Stomach (tissue), 19 donors: ENCODE measurements at regions of chr19 and their contacts with region 1.

Region 1: DNA sequence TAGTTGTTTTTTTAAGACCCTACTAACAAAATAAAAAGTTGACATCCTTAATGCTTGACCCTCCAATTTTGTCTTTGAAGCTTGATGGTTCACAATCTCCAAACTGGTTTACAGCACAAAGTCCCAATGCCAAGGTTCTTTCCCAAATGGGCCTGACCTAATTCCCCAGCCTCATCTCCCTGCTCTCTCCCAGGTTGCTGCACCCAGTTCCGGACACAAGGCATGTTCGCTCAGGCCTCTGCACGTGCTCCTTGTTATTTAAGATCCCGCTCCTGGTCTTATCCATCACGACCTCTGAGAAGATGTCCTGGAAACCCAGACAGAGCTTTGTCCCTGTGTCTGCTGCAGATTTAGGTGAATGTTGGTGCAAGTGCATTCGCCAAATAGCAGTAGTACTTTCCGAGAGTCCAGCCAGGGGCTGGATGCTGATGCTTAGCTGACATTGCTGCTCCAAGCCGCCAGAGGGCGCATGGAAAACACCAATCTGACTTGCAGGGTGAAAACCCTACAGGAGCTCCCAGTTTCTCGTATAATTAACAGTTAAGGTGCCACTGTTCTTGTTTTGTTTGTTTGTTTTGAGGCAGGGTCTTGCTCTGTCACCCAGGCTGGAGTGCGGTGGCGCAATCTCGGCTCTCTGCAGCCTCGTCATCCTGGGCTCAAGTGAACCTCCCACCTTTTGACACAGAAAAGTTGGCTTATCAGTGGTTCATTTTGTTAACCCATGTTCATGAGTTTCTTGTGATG is 18.5 kb downstream of the LYPD3 start:
- DNase-seq: peak; percentile 80 to 92
- H3K4me3 ChIP-seq: no peak overlapping the region
- H3K27ac ChIP-seq: no peak overlapping the region
- H3K4me1 ChIP-seq: peaks cover 0 to 6% (median 3%) of the 10 kb centered on the region in 4 donors
- H3K27me3 ChIP-seq: no peaks in the 10 kb centered on the region
- CTCF ChIP-seq: peak in 5 of 7 experiments; percentile 88 to 97 (median 94)
- EP300 ChIP-seq: no peak
- POLR2A ChIP-seq: no peak

Region 2: GRCh38 chr19:43519436-43520088 is 72.6 kb after region 1 on chr19:
- intact Hi-C with region 1: loop called (anchors 5 kb)
- DNase-seq: peak; percentile 84 to 94
- H3K4me3 ChIP-seq: no peak overlapping the region
- H3K27ac ChIP-seq: no peak overlapping the region
- H3K4me1 ChIP-seq: peaks cover 2 to 38% (median 11%) of the 10 kb centered on the region in 4 donors
- H3K27me3 ChIP-seq: no peaks in the 10 kb centered on the region
- CTCF ChIP-seq: peak in 5 of 7 experiments; percentile 78 to 93 (median 90)
- EP300 ChIP-seq: no peak
- POLR2A ChIP-seq: no peak

Region 3: GRCh38 chr19:43595999-43596841 is 149.3 kb after region 1 on chr19 and contains the starts of genes IRGQ and ZNF576:
- intact Hi-C with region 1: no loop called
- DNase-seq: peak; percentile 100
- H3K4me3 ChIP-seq: peak within 1 kb of the TSS; percentile 62 to 74 (median 67)
- H3K27ac ChIP-seq: peak within 1 kb of the TSS; percentile 90 to 96 (median 96)
- H3K4me1 ChIP-seq: peaks cover 34 to 63% (median 54%) of the 10 kb centered on the region in 4 donors
- H3K27me3 ChIP-seq: no peaks in the 10 kb centered on the region
- CTCF ChIP-seq: no peak
- EP300 ChIP-seq: no peak
- POLR2A ChIP-seq: peak in 2 of 4 donors; percentile 90 to 94
- total RNA-seq, gene IRGQ: 5.3 to 57.1 (median 25.3) TPM
- total RNA-seq, gene ZNF576: 4.2 to 21.6 (median 15.9) TPM in 4 of 5 donors, not detected in the other